ENCODE measurements at regions of chr21 and their contacts with region 1.

Region 1: DNA sequence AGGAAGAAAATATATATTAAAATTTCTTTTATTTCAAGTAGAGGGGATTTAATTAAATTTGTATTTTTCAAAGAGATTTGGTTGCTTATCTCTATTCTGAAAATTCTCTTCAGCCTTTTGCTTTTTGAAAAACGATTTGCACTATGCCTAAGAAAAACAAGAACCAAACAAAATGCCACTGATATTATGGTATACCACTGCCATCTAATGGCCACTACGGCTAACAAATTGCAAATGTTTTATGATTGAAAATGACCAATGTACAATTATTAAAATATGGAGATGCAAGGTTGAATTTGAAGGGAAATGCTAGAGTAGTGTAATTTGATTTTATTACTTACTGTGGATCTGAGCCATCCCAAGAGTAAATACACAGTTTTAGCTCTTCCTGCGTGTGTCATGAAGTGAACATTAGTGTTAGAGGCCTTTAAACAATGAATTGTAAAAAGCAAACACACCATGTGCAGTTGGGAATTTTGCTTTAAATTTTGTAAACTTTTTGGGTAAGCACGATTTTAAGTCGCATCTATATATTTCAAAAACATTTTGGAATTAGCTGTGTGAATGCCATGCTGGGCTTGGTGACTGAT is 137.4 kb upstream of the USP25 start:
- DNase-seq: peak in 2 of 9 experiments; percentile 54 to 64
- ATAC-seq: no peak
- H3K4me3 ChIP-seq: no peak overlapping the region
- H3K4me3 Mint-ChIP-seq: no peak overlapping the region
- H3K27ac ChIP-seq: no peak overlapping the region
- H3K27ac Mint-ChIP-seq: no peak overlapping the region
- H3K4me1 ChIP-seq: no peaks in the 10 kb centered on the region
- H3K4me1 Mint-ChIP-seq: no peaks in the 10 kb centered on the region
- H3K27me3 ChIP-seq: no peaks in the 10 kb centered on the region
- H3K27me3 Mint-ChIP-seq: peaks cover 5% of the 10 kb centered on the region
- CTCF ChIP-seq: peak; percentile 65

Region 2: GRCh38 chr21:14259747-14260146 is 1332.6 kb before region 1 on chr21:
- CTCF ChIA-PET with region 1: no interaction called
- POLR2A ChIA-PET with region 1: no interaction called
- intact Hi-C with region 1: loop called (anchors 1 to 2 kb)
- DNase-seq: peak in 2 of 9 experiments; percentile 39 to 55
- ATAC-seq: peak; percentile 54
- H3K4me3 ChIP-seq: no peak overlapping the region
- H3K4me3 Mint-ChIP-seq: no peak overlapping the region
- H3K27ac ChIP-seq: no peak overlapping the region
- H3K27ac Mint-ChIP-seq: no peak overlapping the region
- H3K4me1 ChIP-seq: no peaks in the 10 kb centered on the region
- H3K4me1 Mint-ChIP-seq: no peaks in the 10 kb centered on the region
- H3K27me3 ChIP-seq: no peaks in the 10 kb centered on the region
- H3K27me3 Mint-ChIP-seq: no peaks in the 10 kb centered on the region
- CTCF ChIP-seq: peak; percentile 62

Region 3: GRCh38 chr21:14403681-14404318 is 1188.6 kb before region 1 on chr21:
- CTCF ChIA-PET with region 1: no interaction called
- POLR2A ChIA-PET with region 1: no interaction called
- intact Hi-C with region 1: loop called (anchors 1 kb)
- DNase-seq: peak in 2 of 9 experiments; percentile 54 to 68
- ATAC-seq: peak; percentile 74
- H3K4me3 ChIP-seq: no peak overlapping the region
- H3K4me3 Mint-ChIP-seq: no peak overlapping the region
- H3K27ac ChIP-seq: no peak overlapping the region
- H3K27ac Mint-ChIP-seq: no peak overlapping the region
- H3K4me1 ChIP-seq: no peaks in the 10 kb centered on the region
- H3K4me1 Mint-ChIP-seq: no peaks in the 10 kb centered on the region
- H3K27me3 ChIP-seq: no peaks in the 10 kb centered on the region
- H3K27me3 Mint-ChIP-seq: no peaks in the 10 kb centered on the region
- CTCF ChIP-seq: peak; percentile 75

Region 4: DNA sequence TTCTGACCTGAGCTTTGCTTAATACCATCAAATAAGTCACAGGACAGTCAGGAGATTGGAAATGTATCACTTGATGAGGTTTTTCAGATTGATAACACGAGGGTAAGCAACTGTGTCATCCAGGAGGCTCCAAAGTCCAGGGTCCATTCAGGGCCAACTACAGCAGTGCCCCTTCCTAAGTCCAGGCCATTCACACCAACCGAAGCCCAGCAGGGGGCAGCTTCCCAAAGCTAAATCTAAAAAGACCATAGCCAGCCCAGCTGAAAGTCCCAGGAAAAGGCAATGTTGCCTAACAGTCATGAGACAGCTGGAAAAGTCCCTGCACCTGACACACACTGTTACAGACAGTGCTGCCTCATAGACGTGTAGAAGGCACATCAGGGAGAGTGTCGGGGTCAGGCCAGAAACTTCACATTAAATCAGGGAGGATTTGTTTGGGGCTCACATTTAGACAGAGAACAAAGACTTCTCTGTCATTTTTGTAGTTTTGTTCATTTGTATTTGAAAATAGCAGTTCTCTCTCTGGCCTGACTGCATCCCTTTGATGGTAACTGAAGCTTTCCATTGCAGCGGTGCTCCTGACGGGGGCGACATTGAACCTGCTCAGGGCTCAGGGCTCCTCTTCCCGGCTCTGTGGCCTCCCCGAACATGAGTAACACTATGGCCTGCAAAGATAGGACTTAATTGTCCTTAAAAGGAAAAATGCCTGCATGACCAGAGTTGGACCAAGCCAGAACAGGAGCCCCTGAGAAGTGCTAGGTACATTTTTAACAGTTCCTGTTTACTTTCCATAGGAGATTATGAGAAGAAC is 728.0 kb before region 1 on chr21:
- CTCF ChIA-PET with region 1: no interaction called
- POLR2A ChIA-PET with region 1: no interaction called
- intact Hi-C with region 1: loop called in 1 of 2 experiments (anchors 1 kb)
- DNase-seq: peak in 5 of 9 experiments; percentile 17 to 34 (median 24)
- ATAC-seq: no peak
- H3K4me3 ChIP-seq: no peak overlapping the region
- H3K4me3 Mint-ChIP-seq: no peak overlapping the region
- H3K27ac ChIP-seq: no peak overlapping the region
- H3K27ac Mint-ChIP-seq: no peak overlapping the region
- H3K4me1 ChIP-seq: no peaks in the 10 kb centered on the region
- H3K4me1 Mint-ChIP-seq: peaks cover 8% of the 10 kb centered on the region
- H3K27me3 ChIP-seq: no peaks in the 10 kb centered on the region
- H3K27me3 Mint-ChIP-seq: no peaks in the 10 kb centered on the region
- CTCF ChIP-seq: no peak

Region 5: GRCh38 chr21:15520811-15521636 is 71.3 kb before region 1 on chr21:
- CTCF ChIA-PET with region 1: no interaction called
- POLR2A ChIA-PET with region 1: no interaction called
- intact Hi-C with region 1: no loop called
- DNase-seq: peak in 2 of 9 experiments; percentile 8 to 31
- ATAC-seq: peak; percentile 38
- H3K4me3 ChIP-seq: no peak overlapping the region
- H3K4me3 Mint-ChIP-seq: no peak overlapping the region
- H3K27ac ChIP-seq: no peak overlapping the region
- H3K27ac Mint-ChIP-seq: peak overlapping the region; percentile 25
- H3K4me1 ChIP-seq: peaks cover 11% of the 10 kb centered on the region
- H3K4me1 Mint-ChIP-seq: peaks cover 15% of the 10 kb centered on the region
- H3K27me3 ChIP-seq: no peaks in the 10 kb centered on the region
- H3K27me3 Mint-ChIP-seq: no peaks in the 10 kb centered on the region
- CTCF ChIP-seq: peak; percentile 26

Measured in CD8-positive, alpha-beta T cell (primary cell).